Activated T-helper 2 cell treated with anti-CD3 and anti-CD28 coated beads, Interferon-gamma antibody, Interleukin-2, Interleukin-4, amounts not matched to agents 10 μg/mL and 5 μg/mL and 100 μg/mL, durations not matched to agents 14 hours and 24 hours and 36 hours (primary cell): ENCODE measurements at regions of chrX and their contacts with region 1.

Region 1: GRCh38 chrX:13254076-13254785 is 65.6 kb downstream of the ATXN3L start:
- DNase-seq: no peak
- H3K4me3 Mint-ChIP-seq: no peak overlapping the region
- H3K27ac Mint-ChIP-seq: no peak overlapping the region
- H3K4me1 Mint-ChIP-seq: peaks cover 48% of the 10 kb centered on the region
- H3K27me3 Mint-ChIP-seq: no peaks in the 10 kb centered on the region

Region 2: DNA sequence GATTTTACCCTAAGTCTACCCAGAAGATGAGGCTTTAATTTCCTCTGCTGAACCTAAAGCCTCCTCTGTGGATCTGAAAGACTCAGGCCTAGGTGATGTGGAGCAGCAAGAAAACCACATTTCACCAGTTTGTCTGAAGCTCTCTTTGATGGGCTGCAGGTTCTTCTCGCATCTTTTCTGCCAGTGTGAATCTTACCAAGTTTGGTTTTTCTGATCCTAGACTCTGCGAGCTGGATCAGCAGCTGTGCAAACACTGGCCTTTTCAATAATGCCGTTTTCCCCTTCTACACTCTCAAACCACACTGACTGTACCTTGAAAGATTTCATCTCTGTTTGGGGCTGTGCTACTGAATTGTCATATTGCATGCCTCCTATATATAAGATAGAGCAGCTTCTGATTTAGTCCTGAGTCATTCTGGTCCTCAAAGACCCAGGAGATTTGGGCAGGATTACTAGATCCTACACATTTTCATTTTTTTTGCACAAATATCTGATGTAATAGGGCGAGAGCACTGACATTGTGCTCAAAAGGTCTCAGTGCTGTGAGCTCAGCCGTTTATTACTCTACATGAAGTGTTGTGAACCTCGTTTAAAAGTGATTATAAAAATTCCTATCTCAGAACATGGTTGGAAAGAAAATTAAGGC is 76.2 kb before region 1 on chrX:
- intact Hi-C with region 1: loop called (anchors 10 kb)
- DNase-seq: no peak
- H3K4me3 Mint-ChIP-seq: no peak overlapping the region
- H3K27ac Mint-ChIP-seq: no peak overlapping the region
- H3K4me1 Mint-ChIP-seq: peaks cover 4% of the 10 kb centered on the region
- H3K27me3 Mint-ChIP-seq: no peaks in the 10 kb centered on the region

Region 3: DNA sequence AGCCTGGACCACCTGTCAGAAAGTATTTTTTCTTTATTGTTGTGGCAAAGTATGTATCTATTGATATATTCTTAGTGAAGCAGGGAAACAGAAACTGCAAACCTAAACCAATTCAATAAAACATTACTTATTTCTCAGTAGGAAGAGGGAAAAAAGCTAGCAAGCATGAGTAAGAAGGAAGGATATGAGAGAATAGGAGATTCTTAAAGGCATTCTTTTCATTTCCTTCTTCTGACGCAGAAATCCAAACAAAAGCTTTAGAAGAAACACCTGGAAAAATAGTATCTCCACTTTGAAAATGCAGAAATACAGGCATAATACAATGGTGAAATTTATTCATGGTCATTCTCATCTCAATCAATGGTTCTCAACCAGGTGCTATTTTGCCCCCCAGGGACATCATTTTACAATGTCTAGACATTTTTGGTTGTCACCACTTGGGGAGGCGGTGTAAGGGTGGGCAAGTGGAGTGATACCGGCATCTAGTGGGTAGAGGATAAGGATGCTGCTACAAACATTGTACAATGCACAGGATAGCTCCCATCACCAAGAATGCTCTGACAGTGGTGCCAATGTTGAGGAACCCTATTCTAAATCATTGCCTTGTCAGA is 87.4 kb after region 1 on chrX:
- intact Hi-C with region 1: no loop called
- DNase-seq: no peak
- H3K4me3 Mint-ChIP-seq: no peak overlapping the region
- H3K27ac Mint-ChIP-seq: no peak overlapping the region
- H3K4me1 Mint-ChIP-seq: no peaks in the 10 kb centered on the region
- H3K27me3 Mint-ChIP-seq: no peaks in the 10 kb centered on the region

Region 4: DNA sequence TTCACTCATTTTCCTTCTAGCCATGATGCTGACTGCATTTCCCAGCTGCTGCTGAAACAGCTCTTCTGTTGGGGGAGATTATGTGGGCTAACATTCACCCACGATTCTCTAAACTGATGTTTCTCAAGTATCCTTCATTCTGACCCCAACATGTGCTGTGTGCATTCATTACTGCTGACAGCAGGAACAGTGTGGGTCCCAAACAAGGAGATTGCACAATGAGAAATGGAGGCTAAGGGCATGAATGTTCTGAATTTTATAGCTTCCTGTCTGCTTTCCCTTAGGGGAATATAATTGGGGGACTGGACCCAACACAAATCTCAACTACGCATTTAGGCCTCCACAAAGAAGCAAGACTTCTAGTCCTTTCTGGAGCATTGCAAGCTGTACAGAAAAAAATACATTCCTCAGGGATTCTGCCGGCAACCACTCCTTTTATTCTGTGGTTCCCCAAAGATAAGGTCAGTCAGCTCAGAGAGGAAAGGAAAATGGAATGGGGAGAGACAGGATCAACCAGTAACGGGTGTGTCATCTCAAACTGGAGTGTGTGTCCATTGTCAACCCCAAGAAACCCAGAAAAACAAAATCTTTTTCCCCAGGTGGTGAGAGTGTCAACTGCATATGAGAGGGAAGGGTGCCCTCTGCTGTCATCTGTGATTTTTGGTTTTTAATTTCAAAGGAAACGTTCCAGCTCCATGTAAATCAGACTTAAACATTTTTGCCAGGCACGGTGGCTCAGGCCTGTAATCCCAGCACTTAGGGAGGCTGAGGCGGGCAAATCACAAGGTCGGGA is 233.7 kb after region 1 on chrX:
- intact Hi-C with region 1: loop called (anchors 10 kb)
- DNase-seq: peak; percentile 14
- H3K4me3 Mint-ChIP-seq: no peak overlapping the region
- H3K27ac Mint-ChIP-seq: peak overlapping the region; percentile 81
- H3K4me1 Mint-ChIP-seq: peaks cover 11% of the 10 kb centered on the region
- H3K27me3 Mint-ChIP-seq: no peaks in the 10 kb centered on the region

Region 5: DNA sequence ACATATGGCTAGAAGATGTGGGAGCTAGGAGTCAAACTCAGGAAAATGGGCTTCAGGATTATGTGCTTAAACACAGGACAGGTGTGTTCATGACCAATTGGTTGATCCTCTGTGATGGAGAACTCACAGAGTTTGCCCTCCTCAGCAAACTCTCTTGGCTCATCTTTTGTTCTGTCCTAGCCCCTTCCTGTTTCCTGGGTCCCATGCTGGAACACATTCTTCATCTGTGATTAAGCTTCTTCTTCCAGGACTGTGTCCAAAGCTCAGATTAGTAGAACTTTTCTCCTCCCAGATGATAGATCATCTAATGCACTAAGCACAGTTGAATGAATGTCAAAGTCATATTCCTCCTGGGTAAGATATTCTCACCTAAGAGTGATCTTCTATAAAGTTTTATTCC is 359.9 kb after region 1 on chrX:
- intact Hi-C with region 1: no loop called
- DNase-seq: no peak
- H3K4me3 Mint-ChIP-seq: no peak overlapping the region
- H3K27ac Mint-ChIP-seq: no peak overlapping the region
- H3K4me1 Mint-ChIP-seq: peaks cover 5% of the 10 kb centered on the region
- H3K27me3 Mint-ChIP-seq: peaks cover 1% of the 10 kb centered on the region